ENCODE measurements at regions of chr13 and their contacts with region 1.

Region 1: DNA sequence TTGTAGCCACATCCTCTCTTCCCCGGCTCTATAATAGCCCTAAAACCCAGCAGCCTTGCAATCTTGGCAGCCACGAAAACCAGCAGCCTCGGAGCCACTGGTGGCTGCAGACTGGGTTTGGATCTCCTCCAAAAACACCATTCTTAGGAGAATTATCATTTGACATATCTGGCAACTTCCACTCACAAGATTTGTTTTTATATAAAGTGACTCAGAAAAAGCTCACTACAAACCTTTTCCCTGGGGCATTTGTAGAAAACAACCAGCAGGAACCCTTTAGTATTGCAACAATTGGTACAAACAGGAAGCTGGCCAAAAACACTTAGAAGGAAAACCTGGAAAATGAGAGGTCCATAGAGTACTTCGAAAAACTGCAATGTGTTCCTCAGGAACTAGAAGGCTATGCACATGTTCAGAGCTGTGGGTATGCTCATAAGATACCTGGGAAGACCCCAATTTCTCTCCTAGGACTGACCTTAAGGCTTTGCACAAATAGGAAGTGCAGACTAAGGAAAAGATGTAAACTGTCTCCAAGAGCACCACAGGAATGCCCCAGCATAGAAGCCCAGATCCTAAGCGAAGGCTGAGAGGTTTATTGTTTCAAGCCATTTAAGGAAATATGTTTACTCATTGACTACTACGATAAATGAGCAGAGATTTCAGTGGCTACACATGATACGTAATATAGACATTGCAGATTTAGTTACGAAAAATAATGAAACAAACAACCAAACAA is 71.2 kb downstream of the MYO16 start:
- DNase-seq: no peak
- ATAC-seq: no peak
- H3K4me3 Mint-ChIP-seq: no peak overlapping the region
- H3K27ac Mint-ChIP-seq: no peak overlapping the region
- H3K4me1 Mint-ChIP-seq: no peaks in the 10 kb centered on the region
- H3K27me3 Mint-ChIP-seq: peaks cover 10% of the 10 kb centered on the region

Region 2: GRCh38 chr13:108643646-108644353 is 56.8 kb before region 1 on chr13:
- CTCF ChIA-PET with region 1: no interaction called
- POLR2A ChIA-PET with region 1: no interaction called
- intact Hi-C with region 1: no loop called
- DNase-seq: no peak
- ATAC-seq: no peak
- H3K4me3 Mint-ChIP-seq: no peak overlapping the region
- H3K27ac Mint-ChIP-seq: no peak overlapping the region
- H3K4me1 Mint-ChIP-seq: no peaks in the 10 kb centered on the region
- H3K27me3 Mint-ChIP-seq: no peaks in the 10 kb centered on the region

Region 3: DNA sequence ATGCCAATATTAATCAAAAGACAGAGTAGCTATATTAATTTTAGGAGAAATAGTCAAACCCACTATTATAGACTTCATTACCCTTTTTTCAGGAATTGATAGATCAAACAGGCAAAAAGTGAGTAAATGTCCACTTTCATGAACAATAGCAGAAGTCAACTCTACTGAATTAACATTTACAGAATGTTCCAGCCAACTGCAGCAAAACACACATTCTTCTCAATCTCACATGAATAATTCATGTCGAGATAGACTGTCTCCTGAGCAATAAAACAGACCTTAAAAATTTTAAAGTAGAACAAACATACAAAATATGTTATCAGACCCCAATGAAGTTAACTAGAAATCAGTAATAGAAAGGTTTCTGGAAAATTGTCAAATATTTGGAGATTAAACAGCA is 47.2 kb after region 1 on chr13:
- CTCF ChIA-PET with region 1: no interaction called
- POLR2A ChIA-PET with region 1: no interaction called
- intact Hi-C with region 1: loop called in 1 of 2 experiments (anchors 2 kb)
- DNase-seq: no peak
- ATAC-seq: no peak
- H3K4me3 Mint-ChIP-seq: no peak overlapping the region
- H3K27ac Mint-ChIP-seq: no peak overlapping the region
- H3K4me1 Mint-ChIP-seq: no peaks in the 10 kb centered on the region
- H3K27me3 Mint-ChIP-seq: peaks cover 5% of the 10 kb centered on the region

Measured in activated CD4-positive, alpha-beta T cell treated with anti-CD3 and anti-CD28 coated beads for 36 hours (primary cell).